B cell (primary cell): ENCODE measurements at regions of chr14 and their contacts with region 1.

Region 1: DNA sequence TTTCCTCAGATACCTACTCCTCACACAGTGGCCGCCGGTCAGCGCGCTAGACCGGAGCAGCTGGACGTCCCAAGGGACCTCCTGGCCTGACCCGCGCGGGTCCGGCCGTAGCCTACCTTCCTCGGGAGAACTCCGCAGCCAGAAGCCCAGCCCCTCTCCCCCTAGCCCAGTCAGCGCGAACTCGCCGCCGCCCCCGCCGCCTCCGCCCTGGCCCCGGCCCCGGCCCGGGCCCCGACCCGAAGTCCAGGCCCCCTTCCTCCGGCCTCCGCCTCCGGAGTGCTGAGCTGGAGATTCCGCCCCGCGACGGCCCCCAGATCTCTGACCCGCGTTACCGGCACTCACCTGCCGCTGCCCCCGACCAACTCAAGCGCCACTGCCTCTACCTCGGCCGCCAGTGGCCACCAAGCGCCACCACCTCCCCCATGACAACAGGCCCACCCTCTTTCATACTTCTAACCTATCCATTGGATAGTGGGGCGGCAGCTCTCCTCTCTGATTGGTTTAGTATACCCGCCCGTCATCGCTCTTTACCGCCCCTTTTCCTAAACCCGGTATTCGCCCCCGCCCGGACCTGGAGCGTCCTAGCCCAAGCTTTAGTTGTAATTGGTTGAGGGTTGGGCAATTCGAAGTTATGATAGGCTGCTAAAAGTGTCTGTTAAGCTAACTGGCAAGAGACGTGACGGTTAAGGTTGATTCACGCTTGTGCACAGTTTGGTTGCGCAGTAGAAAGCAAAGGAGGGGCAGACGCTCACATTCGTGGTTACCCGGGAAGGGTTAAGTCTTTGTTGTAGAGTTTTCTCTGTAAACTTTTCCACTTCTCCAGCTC is at the start of gene NUMB:
- DNase-seq: peak; percentile 99
- ATAC-seq: peak; percentile 97
- H3K4me3 ChIP-seq: peak within 1 kb of the TSS; percentile 74 to 97 (median 95)
- H3K4me3 Mint-ChIP-seq: peak within 1 kb of the TSS; percentile 96
- H3K27ac ChIP-seq: peak within 1 kb of the TSS; percentile 74 to 91
- H3K27ac Mint-ChIP-seq: peak within 1 kb of the TSS; percentile 95
- H3K4me1 ChIP-seq: peaks cover 23 to 34% of the 10 kb centered on the region in 2 donors
- H3K4me1 Mint-ChIP-seq: peaks cover 53% of the 10 kb centered on the region
- H3K27me3 ChIP-seq: no peaks in the 10 kb centered on the region
- H3K27me3 Mint-ChIP-seq: no peaks in the 10 kb centered on the region
- CTCF ChIP-seq: no peak
- total RNA-seq, gene NUMB: 102 and 108 TPM in 2 replicates

Region 2: GRCh38 chr14:72863216-72864006 is 595.0 kb before region 1 on chr14:
- CTCF ChIA-PET with region 1: no interaction called
- POLR2A ChIA-PET with region 1: no interaction called
- intact Hi-C with region 1: no loop called
- DNase-seq: no peak
- ATAC-seq: no peak
- H3K4me3 ChIP-seq: no peak overlapping the region
- H3K4me3 Mint-ChIP-seq: no peak overlapping the region
- H3K27ac ChIP-seq: no peak overlapping the region
- H3K27ac Mint-ChIP-seq: no peak overlapping the region
- H3K4me1 ChIP-seq: peaks cover 16 to 19% of the 10 kb centered on the region in 2 donors
- H3K4me1 Mint-ChIP-seq: peaks cover 56% of the 10 kb centered on the region
- H3K27me3 ChIP-seq: no peaks in the 10 kb centered on the region
- H3K27me3 Mint-ChIP-seq: no peaks in the 10 kb centered on the region
- CTCF ChIP-seq: no peak

Region 3: GRCh38 chr14:73058224-73058921 is 400.0 kb before region 1 on chr14 and contains the start of gene RBM25:
- CTCF ChIA-PET with region 1: no interaction called
- POLR2A ChIA-PET with region 1: no interaction called
- intact Hi-C with region 1: loop called (anchors 1 kb)
- DNase-seq: peak; percentile 98
- ATAC-seq: peak; percentile 94
- H3K4me3 ChIP-seq: peak within 1 kb of the TSS; percentile 77 to 94 (median 84)
- H3K4me3 Mint-ChIP-seq: no peak within 1 kb of the TSS
- H3K27ac ChIP-seq: peak within 1 kb of the TSS; percentile 84 to 91
- H3K27ac Mint-ChIP-seq: no peak within 1 kb of the TSS
- H3K4me1 ChIP-seq: peaks cover 25 to 28% of the 10 kb centered on the region in 2 donors
- H3K4me1 Mint-ChIP-seq: peaks cover 39% of the 10 kb centered on the region
- H3K27me3 ChIP-seq: no peaks in the 10 kb centered on the region
- H3K27me3 Mint-ChIP-seq: no peaks in the 10 kb centered on the region
- CTCF ChIP-seq: no peak
- total RNA-seq, gene RBM25: 137 and 151 TPM in 2 replicates

Region 4: DNA sequence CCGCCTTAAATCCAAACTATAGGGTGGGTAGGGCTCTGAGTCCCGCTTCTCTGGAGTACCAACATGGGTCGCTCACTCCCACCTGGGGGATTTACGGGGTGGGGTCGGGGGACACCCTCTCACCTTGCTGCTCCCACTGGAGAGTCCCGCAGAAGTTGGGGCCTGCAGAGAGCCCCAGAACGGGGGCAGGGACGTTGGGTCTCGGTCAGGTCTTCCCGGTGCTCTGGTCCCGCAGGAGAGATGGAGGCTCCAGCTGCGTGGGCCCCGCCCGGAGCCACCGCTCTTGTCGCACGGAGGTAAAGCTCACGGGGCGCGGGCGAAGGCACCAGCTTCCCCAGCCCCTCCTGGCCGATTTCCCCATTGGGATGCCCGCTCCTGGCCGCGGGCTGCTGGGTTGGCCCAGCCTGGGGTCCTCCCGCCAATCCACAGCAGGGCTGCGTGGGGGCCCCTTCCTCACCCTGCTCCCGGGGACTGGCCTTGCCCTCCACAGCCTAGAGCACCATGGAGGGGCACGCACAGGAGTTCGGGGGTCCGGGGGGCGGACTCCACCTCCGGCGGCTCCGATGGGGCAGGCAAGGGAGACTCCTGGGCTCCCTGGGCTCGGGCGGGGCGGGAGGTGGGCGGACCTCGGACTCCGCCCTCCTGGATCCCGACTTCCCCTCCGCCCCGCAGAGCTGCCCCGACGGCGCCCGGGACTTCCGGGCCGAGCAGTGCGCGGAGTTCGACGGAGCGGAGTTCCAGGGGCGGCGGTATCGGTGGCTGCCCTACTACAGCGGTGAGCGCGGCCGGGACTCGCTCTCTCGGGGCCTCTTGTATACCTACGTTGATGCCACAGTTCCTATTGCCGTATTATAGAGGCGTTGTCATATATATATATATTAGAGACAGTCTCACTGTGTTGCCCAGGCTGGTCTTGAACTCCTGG is 212.7 kb before region 1 on chr14:
- CTCF ChIA-PET with region 1: no interaction called
- POLR2A ChIA-PET with region 1: no interaction called
- intact Hi-C with region 1: loop called (anchors 5 kb)
- DNase-seq: peak; percentile 82
- ATAC-seq: peak; percentile 84
- H3K4me3 ChIP-seq: peak overlapping the region in 4 of 5 experiments; percentile 63 to 70 (median 66)
- H3K4me3 Mint-ChIP-seq: peak overlapping the region; percentile 75
- H3K27ac ChIP-seq: peak overlapping the region in 1 of 2 donors; percentile 29
- H3K27ac Mint-ChIP-seq: no peak overlapping the region
- H3K4me1 ChIP-seq: peaks cover 58 to 73% of the 10 kb centered on the region in 2 donors
- H3K4me1 Mint-ChIP-seq: peaks cover 71% of the 10 kb centered on the region
- H3K27me3 ChIP-seq: peaks cover 0 to 26% (median 9%) of the 10 kb centered on the region in 4 experiments
- H3K27me3 Mint-ChIP-seq: peaks cover 23% of the 10 kb centered on the region
- CTCF ChIP-seq: no peak

Region 5: GRCh38 chr14:73325630-73326299 is 132.6 kb before region 1 on chr14:
- CTCF ChIA-PET with region 1: no interaction called
- POLR2A ChIA-PET with region 1: no interaction called
- intact Hi-C with region 1: no loop called
- DNase-seq: no peak
- ATAC-seq: no peak
- H3K4me3 ChIP-seq: no peak overlapping the region
- H3K4me3 Mint-ChIP-seq: no peak overlapping the region
- H3K27ac ChIP-seq: peak overlapping the region in 1 of 2 donors; percentile 13
- H3K27ac Mint-ChIP-seq: no peak overlapping the region
- H3K4me1 ChIP-seq: peaks cover 7 to 10% of the 10 kb centered on the region in 2 donors
- H3K4me1 Mint-ChIP-seq: peaks cover 27% of the 10 kb centered on the region
- H3K27me3 ChIP-seq: no peaks in the 10 kb centered on the region
- H3K27me3 Mint-ChIP-seq: no peaks in the 10 kb centered on the region
- CTCF ChIP-seq: no peak

Region 6: DNA sequence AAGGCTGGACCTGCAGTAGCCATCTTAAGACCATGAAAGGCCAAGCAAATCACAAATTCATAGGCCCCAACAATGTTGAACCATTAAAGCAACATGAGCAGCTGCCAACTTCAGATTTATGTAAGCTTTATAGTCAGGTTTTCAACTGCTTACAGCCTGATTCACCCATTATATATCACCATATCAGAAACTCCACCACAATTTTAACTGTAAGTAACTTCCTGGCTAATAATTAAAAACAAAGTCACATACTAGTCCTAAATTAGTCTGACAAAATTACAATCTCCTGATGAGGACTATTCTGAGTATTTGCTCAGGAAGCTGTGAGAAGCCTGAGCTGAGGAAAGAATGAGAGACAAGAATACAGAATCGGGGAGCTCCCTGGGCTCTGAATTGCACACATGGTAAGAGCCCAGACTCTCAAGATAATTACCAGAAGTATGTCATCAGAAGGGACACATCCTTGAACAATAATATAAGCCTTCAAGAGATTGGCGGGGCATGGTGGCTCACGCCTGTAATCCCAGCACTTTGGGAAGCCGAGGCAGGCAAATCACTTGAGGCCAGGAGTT is 55.1 kb before region 1 on chr14:
- CTCF ChIA-PET with region 1: interaction called, 7 read pairs
- POLR2A ChIA-PET with region 1: no interaction called
- intact Hi-C with region 1: loop called (anchors 5 kb)
- DNase-seq: no peak
- ATAC-seq: no peak
- H3K4me3 ChIP-seq: no peak overlapping the region
- H3K4me3 Mint-ChIP-seq: no peak overlapping the region
- H3K27ac ChIP-seq: peak overlapping the region; percentile 70 to 78
- H3K27ac Mint-ChIP-seq: peak overlapping the region; percentile 89
- H3K4me1 ChIP-seq: peaks cover 32 to 44% of the 10 kb centered on the region in 2 donors
- H3K4me1 Mint-ChIP-seq: peaks cover 50% of the 10 kb centered on the region
- H3K27me3 ChIP-seq: no peaks in the 10 kb centered on the region
- H3K27me3 Mint-ChIP-seq: no peaks in the 10 kb centered on the region
- CTCF ChIP-seq: no peak

Region 7: GRCh38 chr14:73424453-73424852 is 33.9 kb before region 1 on chr14:
- CTCF ChIA-PET with region 1: no interaction called
- POLR2A ChIA-PET with region 1: no interaction called
- intact Hi-C with region 1: loop called (anchors 5 kb)
- DNase-seq: peak; percentile 59
- ATAC-seq: peak; percentile 77
- H3K4me3 ChIP-seq: peak overlapping the region in 2 of 5 experiments; percentile 13 to 28
- H3K4me3 Mint-ChIP-seq: peak overlapping the region; percentile 58
- H3K27ac ChIP-seq: peak overlapping the region; percentile 45 to 78
- H3K27ac Mint-ChIP-seq: peak overlapping the region; percentile 65
- H3K4me1 ChIP-seq: peaks cover 29 to 38% of the 10 kb centered on the region in 2 donors
- H3K4me1 Mint-ChIP-seq: peaks cover 52% of the 10 kb centered on the region
- H3K27me3 ChIP-seq: no peaks in the 10 kb centered on the region
- H3K27me3 Mint-ChIP-seq: no peaks in the 10 kb centered on the region
- CTCF ChIP-seq: no peak

Region 8: DNA sequence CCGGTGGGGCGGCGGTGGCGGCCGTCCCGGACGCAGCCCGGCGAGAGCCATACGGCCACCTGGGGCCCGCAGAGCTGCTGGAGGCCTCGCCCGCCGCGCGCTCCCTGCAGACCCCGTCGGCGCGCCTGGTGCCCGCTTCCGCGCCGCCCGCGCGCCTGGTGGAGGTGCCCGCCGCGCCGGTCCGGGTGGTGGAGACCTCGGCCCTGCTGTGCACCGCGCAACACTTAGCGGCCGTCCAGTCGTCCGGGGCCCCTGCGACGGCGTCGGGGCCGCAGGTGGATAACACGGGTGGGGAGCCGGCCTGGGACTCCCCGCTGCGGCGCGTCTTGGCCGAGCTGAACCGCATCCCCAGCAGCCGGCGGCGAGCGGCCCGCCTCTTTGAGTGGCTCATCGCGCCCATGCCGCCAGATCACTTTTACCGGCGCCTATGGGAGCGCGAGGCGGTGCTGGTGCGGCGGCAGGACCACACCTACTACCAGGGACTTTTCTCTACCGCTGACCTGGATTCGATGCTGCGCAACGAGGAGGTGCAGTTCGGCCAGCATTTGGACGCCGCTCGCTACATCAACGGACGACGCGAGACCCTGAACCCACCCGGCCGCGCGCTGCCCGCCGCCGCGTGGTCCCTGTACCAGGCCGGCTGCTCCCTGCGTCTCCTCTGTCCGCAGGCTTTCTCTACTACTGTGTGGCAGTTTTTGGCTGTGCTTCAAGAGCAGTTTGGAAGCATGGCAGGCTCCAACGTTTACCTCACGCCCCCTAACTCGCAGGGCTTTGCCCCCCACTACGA is 33.1 kb after region 1 on chr14:
- CTCF ChIA-PET with region 1: interaction called, 3 read pairs
- POLR2A ChIA-PET with region 1: interaction called, 4 read pairs
- intact Hi-C with region 1: loop called (anchors 1 kb)
- DNase-seq: peak; percentile 79
- ATAC-seq: peak; percentile 50
- H3K4me3 ChIP-seq: peak overlapping the region; percentile 56 to 86 (median 83)
- H3K4me3 Mint-ChIP-seq: peak overlapping the region; percentile 94
- H3K27ac ChIP-seq: peak overlapping the region; percentile 55 to 64
- H3K27ac Mint-ChIP-seq: peak overlapping the region; percentile 92
- H3K4me1 ChIP-seq: peaks cover 21 to 32% of the 10 kb centered on the region in 2 donors
- H3K4me1 Mint-ChIP-seq: peaks cover 35% of the 10 kb centered on the region
- H3K27me3 ChIP-seq: no peaks in the 10 kb centered on the region
- H3K27me3 Mint-ChIP-seq: no peaks in the 10 kb centered on the region
- CTCF ChIP-seq: no peak